ENCODE measurements at regions of chr11 and their contacts with region 1.

Region 1: DNA sequence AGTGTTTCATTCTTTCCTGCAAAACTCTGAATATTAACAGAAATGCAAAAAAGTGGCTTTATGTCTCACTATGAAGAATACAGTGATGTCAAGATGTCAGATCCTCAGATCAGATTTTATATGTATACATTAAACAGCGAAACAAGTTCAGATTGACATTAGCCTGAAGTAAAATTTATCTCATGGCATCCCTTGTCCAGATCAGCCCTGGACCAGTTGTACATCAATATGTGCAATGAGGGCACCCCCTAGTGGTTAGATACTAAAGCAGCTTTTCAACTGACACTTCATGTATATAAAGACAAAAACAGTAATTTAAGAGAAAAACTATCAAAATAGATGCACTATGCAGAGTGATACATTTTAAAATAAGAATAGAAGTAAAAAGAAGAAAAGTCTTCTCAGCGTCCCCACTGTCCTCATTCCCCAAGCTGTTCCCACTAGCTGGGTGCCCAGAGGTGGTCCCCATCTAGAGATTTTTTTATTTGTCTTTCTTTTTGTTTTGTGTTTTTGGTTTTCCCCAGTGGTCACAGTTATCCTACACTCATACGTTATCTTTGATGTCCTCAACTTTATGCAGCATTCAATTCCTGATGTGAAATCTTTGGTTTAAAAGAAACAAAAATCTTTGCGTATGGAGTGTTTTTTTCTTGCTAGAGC is 2193.4 kb upstream of the RAG2 start:
- DNase-seq: peak; percentile 65
- H3K4me3 ChIP-seq: no peak overlapping the region
- H3K27ac ChIP-seq: no peak overlapping the region
- H3K4me1 ChIP-seq: no peaks in the 10 kb centered on the region
- CTCF ChIP-seq: peak; percentile 91

Region 2: GRCh38 chr11:37002831-37003230 is 1788.6 kb before region 1 on chr11:
- CTCF ChIA-PET with region 1: no interaction called
- POLR2A ChIA-PET with region 1: no interaction called
- intact Hi-C with region 1: loop called (anchors 5 kb)
- DNase-seq: no peak
- H3K4me3 ChIP-seq: no peak overlapping the region
- H3K27ac ChIP-seq: no peak overlapping the region
- H3K4me1 ChIP-seq: no peaks in the 10 kb centered on the region
- CTCF ChIP-seq: no peak

Region 3: GRCh38 chr11:38773844-38774243 is 17.6 kb before region 1 on chr11:
- CTCF ChIA-PET with region 1: no interaction called
- POLR2A ChIA-PET with region 1: no interaction called
- intact Hi-C with region 1: no loop called
- DNase-seq: no peak
- H3K4me3 ChIP-seq: no peak overlapping the region
- H3K27ac ChIP-seq: no peak overlapping the region
- H3K4me1 ChIP-seq: no peaks in the 10 kb centered on the region
- CTCF ChIP-seq: no peak